HepG2 (cell line): ENCODE measurements at regions of chr7 and their contacts with region 1.

Region 1: GRCh38 chr7:22559829-22560489 is 60.0 kb upstream of the STEAP1B start:
- DNase-seq: peak; percentile 77
- ATAC-seq: peak; percentile 97
- H3K4me3 ChIP-seq: no peak overlapping the region
- H3K27ac ChIP-seq: no peak overlapping the region
- H3K4me1 ChIP-seq: peaks cover 8% of the 10 kb centered on the region; the same call in 1 of the 2 replicates
- H3K27me3 ChIP-seq: peaks cover 6 to 23% of the 10 kb centered on the region in 2 experiments; a peak in 3 of 5 replicates
- CTCF ChIP-seq: peak; percentile 80
- EP300 ChIP-seq: no peak
- POLR2A ChIP-seq: no peak
- RAD21 ChIP-seq: peak; percentile 84

Region 2: GRCh38 chr7:22542254-22542653 is 17.7 kb before region 1 on chr7:
- CTCF ChIA-PET with region 1: no interaction called
- POLR2A ChIA-PET with region 1: no interaction called
- in situ Hi-C with region 1: no loop called
- intact Hi-C with region 1: no loop called
- DNase-seq: no peak
- ATAC-seq: no peak
- H3K4me3 ChIP-seq: no peak overlapping the region
- H3K27ac ChIP-seq: no peak overlapping the region
- H3K4me1 ChIP-seq: no peaks in the 10 kb centered on the region
- H3K27me3 ChIP-seq: peaks cover 1 to 5% of the 10 kb centered on the region in 2 experiments; a peak in 2 of 5 replicates
- CTCF ChIP-seq: no peak
- EP300 ChIP-seq: no peak
- POLR2A ChIP-seq: no peak
- RAD21 ChIP-seq: no peak

Region 3: GRCh38 chr7:22860784-22861482 is 301.0 kb after region 1 on chr7:
- CTCF ChIA-PET with region 1: no interaction called
- POLR2A ChIA-PET with region 1: no interaction called
- in situ Hi-C with region 1: no loop called
- intact Hi-C with region 1: loop called (anchors 10 kb)
- DNase-seq: peak; percentile 13
- ATAC-seq: 0 out of 3 replicates have a peak, but pooled peaks have one; percentile 14
- H3K4me3 ChIP-seq: no peak overlapping the region
- H3K27ac ChIP-seq: no peak overlapping the region
- H3K4me1 ChIP-seq: peaks cover 57% of the 10 kb centered on the region
- H3K27me3 ChIP-seq: no peaks in the 10 kb centered on the region
- CTCF ChIP-seq: peak; percentile 31
- EP300 ChIP-seq: no peak
- POLR2A ChIP-seq: no peak; a peak in 1 of 4 replicates
- RAD21 ChIP-seq: no peak

Region 4: GRCh38 chr7:23055582-23056178 is 495.7 kb after region 1 on chr7:
- CTCF ChIA-PET with region 1: interaction called, 33 read pairs
- POLR2A ChIA-PET with region 1: no interaction called
- in situ Hi-C with region 1: loop called (anchors 5 kb)
- intact Hi-C with region 1: loop called (anchors 1 kb)
- DNase-seq: peak; percentile 52
- ATAC-seq: peak; percentile 86
- H3K4me3 ChIP-seq: no peak overlapping the region
- H3K27ac ChIP-seq: no peak overlapping the region
- H3K4me1 ChIP-seq: no peaks in the 10 kb centered on the region
- H3K27me3 ChIP-seq: no peaks in the 10 kb centered on the region
- CTCF ChIP-seq: peak; percentile 88
- EP300 ChIP-seq: no peak
- POLR2A ChIP-seq: no peak
- RAD21 ChIP-seq: peak; percentile 82